Activated CD4-positive, alpha-beta memory T cell treated with anti-CD3 and anti-CD28 coated beads for 36 hours (primary cell): ENCODE measurements at regions of chr5 and their contacts with region 1.

Region 1: DNA sequence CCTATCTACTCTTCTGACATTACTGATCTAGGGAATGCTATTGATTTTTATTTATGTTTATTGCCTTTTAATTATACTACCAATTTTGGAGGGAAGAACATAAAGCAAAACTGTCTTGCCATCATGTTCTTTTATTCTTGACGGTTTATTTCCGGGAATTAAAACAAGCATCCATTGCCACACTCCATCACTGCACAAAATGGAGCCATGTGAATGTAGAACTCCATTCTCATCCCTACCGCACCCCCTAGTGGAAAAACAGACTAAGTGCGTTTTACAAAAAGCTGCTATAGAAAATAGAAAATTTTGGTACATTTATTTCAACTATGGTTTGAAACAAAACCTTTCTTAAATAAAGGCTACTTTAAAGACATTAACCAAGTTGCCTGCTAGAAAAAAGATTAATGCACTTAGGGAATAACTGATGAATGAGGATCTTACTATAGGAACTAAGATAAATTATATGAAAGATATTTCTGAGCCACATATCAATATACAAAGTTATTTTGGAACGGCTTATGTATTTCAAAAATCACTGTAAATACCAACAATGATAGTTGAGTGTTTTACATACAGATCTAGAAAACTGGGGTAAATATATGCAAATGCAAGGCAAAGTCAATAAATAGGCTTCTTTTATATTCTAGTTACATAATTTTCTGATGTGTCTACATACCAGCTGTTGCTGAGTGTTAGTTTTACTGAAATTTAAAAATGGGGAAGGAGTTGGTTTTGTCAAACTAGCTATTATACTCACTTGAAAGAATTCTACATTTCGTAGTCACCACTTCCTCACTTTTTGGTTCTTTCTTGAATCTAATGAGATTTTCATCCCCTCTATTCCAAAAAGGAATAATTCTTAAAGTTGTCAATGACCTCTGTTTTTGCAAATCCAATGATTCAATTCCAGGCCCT is 26.5 kb downstream of the OXCT1 start:
- DNase-seq: no peak
- H3K4me3 Mint-ChIP-seq: no peak overlapping the region
- H3K27ac Mint-ChIP-seq: no peak overlapping the region
- H3K4me1 Mint-ChIP-seq: peaks cover 8% of the 10 kb centered on the region
- H3K27me3 Mint-ChIP-seq: no peaks in the 10 kb centered on the region

Region 2: DNA sequence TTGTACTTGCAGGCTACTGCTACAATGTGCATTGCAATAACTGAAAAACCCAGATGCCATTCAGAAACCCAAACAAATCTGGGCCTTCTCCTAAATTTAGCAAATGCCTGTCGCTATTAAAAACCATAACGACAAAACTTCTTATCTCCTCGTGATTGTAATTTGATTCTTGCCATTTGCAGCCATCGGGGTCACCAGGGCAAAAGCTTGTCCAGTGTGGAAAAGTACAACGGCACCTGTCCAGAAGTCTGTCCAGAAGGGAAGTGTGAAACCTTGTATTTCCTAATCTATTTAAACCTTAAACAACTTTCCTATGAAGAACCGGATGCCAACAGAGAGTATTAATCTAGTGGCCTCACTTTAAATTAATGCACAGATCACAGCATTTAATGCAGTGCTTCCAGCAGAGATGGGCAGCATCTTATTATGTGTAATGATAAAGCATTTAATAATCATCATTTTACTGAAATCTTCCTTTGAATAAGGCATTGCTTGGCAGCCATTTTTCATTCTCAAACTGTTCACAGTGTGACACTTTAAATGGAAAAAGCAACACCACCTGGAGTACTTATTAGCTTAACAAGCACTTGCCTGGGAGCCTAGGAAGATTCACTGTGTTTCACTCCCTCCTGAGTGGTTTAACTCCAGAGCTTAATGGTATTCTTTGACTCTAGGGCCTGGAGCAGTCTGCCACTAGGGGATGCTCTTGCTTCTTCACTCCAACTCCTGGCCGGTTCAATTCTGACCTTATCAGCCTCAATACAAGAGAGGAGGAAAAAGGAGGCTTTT is 939.3 kb before region 1 on chr5:
- CTCF ChIA-PET with region 1: interaction called, 7 read pairs
- POLR2A ChIA-PET with region 1: no interaction called
- intact Hi-C with region 1: loop called (anchors 2 kb)
- DNase-seq: peak; percentile 56
- H3K4me3 Mint-ChIP-seq: no peak overlapping the region
- H3K27ac Mint-ChIP-seq: no peak overlapping the region
- H3K4me1 Mint-ChIP-seq: no peaks in the 10 kb centered on the region
- H3K27me3 Mint-ChIP-seq: peaks cover 1% of the 10 kb centered on the region

Region 3: DNA sequence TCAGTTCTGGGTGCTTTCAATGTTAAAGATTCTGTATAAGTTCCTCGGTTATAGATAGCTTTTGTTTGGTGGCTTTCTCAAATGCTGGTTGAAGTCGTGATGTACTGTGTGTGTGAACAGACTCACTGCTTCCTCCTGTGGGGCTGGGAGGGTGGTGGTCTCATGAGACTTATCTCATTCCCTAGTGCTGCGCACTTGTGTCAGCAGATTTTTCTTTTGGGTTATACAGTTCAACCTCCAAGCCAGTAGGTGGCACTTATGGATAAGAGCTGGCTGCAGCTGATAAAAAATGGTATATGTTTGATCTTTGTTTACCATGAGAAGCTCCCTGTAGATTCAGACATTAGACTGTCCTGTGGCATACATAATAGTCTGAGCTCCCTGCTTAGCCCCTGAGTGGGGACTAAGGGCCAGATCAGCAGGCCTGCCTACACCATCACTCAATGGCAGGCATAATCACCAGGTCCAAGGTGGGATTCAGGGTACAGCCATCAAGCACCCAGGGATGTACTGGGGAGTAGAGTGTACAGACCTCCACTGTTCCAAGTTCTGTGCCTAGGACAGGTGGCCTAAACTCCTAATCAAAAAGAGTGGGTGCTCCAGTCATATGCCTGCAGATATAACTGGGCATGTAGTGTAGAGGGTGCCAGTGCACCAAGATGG is 147.7 kb before region 1 on chr5:
- CTCF ChIA-PET with region 1: interaction called, 6 read pairs
- POLR2A ChIA-PET with region 1: no interaction called
- intact Hi-C with region 1: loop called (anchors 1 kb)
- DNase-seq: no peak
- H3K4me3 Mint-ChIP-seq: no peak overlapping the region
- H3K27ac Mint-ChIP-seq: no peak overlapping the region
- H3K4me1 Mint-ChIP-seq: no peaks in the 10 kb centered on the region
- H3K27me3 Mint-ChIP-seq: peaks cover 8% of the 10 kb centered on the region

Region 4: GRCh38 chr5:41754857-41755256 is 88.9 kb before region 1 on chr5:
- CTCF ChIA-PET with region 1: interaction called, 4 read pairs
- POLR2A ChIA-PET with region 1: no interaction called
- intact Hi-C with region 1: loop called (anchors 5 kb)
- DNase-seq: no peak
- H3K4me3 Mint-ChIP-seq: no peak overlapping the region
- H3K27ac Mint-ChIP-seq: no peak overlapping the region
- H3K4me1 Mint-ChIP-seq: peaks cover 22% of the 10 kb centered on the region
- H3K27me3 Mint-ChIP-seq: no peaks in the 10 kb centered on the region

Region 5: GRCh38 chr5:41817625-41818301 is 25.9 kb before region 1 on chr5:
- CTCF ChIA-PET with region 1: no interaction called
- POLR2A ChIA-PET with region 1: no interaction called
- intact Hi-C with region 1: no loop called
- DNase-seq: no peak
- H3K4me3 Mint-ChIP-seq: no peak overlapping the region
- H3K27ac Mint-ChIP-seq: no peak overlapping the region
- H3K4me1 Mint-ChIP-seq: peaks cover 16% of the 10 kb centered on the region
- H3K27me3 Mint-ChIP-seq: no peaks in the 10 kb centered on the region

Region 6: DNA sequence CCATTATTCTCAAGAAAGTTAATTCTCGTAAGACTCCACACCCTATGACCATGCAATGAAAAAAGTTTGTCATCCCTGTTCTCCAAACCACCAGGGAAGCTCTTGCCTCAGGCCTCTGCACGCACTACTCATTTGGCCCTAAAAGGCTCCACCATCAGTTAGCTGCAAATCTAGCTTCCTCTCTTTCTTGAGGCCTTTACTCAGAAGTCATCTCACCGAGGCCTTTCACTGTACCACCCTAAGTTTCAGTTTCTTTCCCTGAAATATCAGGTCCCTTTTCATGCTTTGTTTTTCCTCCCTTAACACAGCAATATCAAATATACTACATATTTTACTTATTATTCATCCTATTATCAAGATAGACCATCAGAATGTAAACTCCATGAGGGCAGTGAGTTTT is 12.6 kb before region 1 on chr5:
- CTCF ChIA-PET with region 1: interaction called, 12 read pairs
- POLR2A ChIA-PET with region 1: no interaction called
- intact Hi-C with region 1: no loop called
- DNase-seq: no peak
- H3K4me3 Mint-ChIP-seq: no peak overlapping the region
- H3K27ac Mint-ChIP-seq: no peak overlapping the region
- H3K4me1 Mint-ChIP-seq: peaks cover 33% of the 10 kb centered on the region
- H3K27me3 Mint-ChIP-seq: no peaks in the 10 kb centered on the region

Region 7: DNA sequence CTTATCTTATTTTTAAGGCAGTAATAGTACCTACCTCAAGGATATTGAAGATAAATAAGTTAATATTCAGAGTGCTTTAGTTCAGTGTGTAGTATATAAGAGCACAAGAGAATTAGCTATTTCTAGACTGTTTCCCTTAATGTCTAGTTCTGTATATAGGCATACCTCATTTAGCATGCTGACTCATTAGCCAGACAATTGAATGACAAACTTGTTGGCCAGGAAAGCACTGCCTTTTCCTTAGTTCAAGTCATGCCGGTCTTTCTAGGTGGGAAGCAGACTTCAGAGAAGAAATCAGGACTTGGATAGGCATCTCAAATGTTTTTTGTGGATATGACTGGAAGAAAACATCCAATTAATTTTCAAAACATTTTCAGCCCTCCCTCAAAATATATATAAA is 78.2 kb after region 1 on chr5:
- CTCF ChIA-PET with region 1: no interaction called
- POLR2A ChIA-PET with region 1: no interaction called
- intact Hi-C with region 1: no loop called
- DNase-seq: no peak
- H3K4me3 Mint-ChIP-seq: no peak overlapping the region
- H3K27ac Mint-ChIP-seq: no peak overlapping the region
- H3K4me1 Mint-ChIP-seq: peaks cover 22% of the 10 kb centered on the region
- H3K27me3 Mint-ChIP-seq: no peaks in the 10 kb centered on the region

Region 8: DNA sequence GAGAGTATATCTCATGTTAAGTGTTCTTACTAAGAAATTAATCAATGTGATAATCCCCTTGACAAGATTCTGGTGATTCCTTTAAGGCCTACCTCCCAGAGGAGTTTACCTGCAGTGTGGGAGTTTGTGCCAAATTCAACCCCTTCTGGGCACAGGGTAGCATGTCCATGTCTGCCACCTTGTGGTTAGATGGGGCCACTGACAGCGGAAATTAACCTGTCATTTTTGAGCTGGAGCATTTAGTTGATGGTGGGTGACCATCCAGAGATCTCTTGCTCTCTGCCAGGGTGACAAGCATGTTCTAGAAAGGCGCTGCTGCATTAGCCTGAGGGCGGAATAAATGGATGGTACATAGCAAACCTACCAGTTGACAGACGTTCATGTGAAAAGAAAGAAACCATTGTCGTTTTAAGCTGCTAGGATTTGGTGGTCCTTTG is 213.6 kb after region 1 on chr5:
- CTCF ChIA-PET with region 1: interaction called, 11 read pairs
- POLR2A ChIA-PET with region 1: no interaction called
- intact Hi-C with region 1: no loop called
- DNase-seq: peak; percentile 68
- H3K4me3 Mint-ChIP-seq: no peak overlapping the region
- H3K27ac Mint-ChIP-seq: no peak overlapping the region
- H3K4me1 Mint-ChIP-seq: no peaks in the 10 kb centered on the region
- H3K27me3 Mint-ChIP-seq: peaks cover 4% of the 10 kb centered on the region